ENCODE measurements at regions of chr16 and their contacts with region 1.

Region 1: DNA sequence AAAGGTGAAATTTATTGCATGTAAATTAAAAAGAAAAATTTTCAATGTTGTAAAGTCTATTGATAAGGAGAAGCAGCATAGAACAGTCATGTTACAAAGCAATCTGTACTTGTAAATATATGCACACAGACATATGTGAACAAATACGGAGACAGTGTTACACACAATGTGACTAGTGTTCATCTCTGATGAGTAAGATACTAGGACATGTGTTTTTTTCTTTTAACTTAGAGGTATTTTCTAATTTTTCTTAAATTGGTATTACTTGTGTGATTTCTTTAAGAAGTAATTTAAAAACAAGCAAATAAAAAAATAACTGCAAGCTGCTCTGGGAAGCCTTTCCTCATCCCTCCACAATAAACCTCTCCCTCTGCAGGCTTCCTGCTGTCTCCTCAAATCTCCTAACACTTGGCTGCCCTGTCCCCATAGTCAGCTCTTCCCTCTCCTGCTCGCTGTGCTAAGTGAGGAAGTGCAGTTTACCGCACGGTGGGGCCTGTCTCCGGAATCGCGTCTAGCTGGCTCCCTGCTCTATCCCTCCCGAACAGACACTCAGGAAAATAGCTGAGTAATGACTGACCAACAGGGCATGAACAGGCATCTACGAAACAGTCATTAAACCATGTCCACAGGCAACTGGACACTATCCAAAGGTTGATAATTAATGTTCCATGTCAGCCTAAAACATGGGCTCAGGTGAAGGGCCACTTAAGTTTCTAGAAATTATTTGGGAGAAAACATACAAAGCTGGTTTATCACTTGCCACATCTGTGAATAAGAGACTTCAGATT is 35.9 kb downstream of the CMTM4 start:
- DNase-seq: peak; percentile 79
- ATAC-seq: peak; percentile 95

Region 2: DNA sequence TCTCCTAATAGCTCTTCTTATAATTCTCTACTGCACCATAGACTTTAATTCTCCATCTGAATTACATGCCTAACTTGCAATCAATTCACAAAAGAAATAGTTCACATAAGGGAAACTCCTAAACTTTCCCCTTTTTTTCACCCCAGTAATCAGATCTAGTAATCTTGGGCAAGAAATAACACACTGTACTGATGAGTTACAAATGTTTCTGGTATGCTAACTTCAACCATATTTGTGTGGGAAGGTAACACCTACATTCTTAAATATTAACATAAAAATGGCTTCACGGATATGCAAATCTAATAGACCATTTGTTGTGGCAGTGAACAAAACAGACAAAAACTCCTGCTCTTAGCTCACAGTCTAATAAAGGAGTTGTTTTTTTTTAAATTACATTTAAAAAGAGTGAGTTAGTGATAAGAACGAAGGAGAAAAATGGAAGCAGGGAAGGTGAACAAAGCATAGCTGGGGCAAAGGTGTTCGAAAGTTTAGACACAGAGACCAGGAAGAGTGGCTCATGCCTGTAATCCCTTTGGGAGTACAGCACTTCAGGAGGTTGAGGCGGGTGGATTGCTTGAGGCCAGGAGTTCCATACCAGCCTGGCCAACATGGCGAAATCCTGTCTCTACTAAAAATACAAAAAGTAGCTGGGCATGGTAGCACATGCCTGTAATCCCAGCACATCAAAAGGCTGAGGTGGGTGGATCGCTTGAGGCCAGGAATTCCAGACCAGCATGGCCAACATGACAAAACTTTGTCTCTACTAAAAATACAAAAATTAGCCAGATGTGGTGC is 21.3 kb before region 1 on chr16:
- intact Hi-C with region 1: no loop called
- DNase-seq: no peak
- ATAC-seq: no peak

Region 3: GRCh38 chr16:66696669-66697630 is 36.3 kb after region 1 on chr16 and contains the start of gene CMTM4:
- intact Hi-C with region 1: loop called (anchors 5 kb)
- DNase-seq: peak; percentile 92
- ATAC-seq: peak; percentile 98
- total RNA-seq, gene CMTM4: 10.9 TPM

Measured in Right ventricle myocardium inferior (tissue), 1 donor.